HepG2 (cell line): ENCODE measurements at regions of chr15 and their contacts with region 1.

Region 1: DNA sequence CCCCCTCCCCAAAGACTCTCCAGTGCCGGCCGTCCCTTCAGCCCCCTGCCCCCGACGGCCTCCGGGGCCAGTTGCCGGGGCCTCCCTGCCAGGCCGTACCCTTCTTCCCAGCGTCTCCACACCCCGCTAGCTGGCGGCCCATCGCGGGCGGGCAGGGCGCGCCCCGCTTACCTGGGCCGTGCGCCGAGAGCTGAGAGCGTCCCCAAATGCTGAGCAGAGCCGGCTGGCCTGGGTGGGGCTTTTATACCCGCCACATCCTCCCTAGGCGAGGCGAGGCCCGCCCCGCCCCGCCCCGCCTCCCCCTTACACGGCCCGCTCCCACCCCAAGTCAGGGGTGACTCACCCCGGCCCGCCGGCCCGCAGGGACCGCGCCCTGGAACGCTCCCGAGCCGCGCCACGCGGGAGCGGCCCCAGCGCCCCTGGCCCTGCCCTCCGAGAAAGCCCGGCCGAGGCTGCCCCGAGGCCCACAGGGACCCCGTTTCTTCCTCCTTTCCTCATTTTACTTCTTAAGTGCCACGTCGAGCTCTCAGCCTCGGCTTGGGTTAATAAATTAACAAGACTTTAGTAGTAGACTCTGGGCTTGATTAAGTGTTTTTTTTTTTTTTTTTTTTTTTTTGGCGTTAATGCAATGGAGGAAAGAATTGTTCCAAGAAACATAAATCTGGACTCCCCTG is at the start of gene ANXA2:
- DNase-seq: no peak
- ATAC-seq: no peak
- H3K4me3 ChIP-seq: no peak within 1 kb of the TSS
- H3K27ac ChIP-seq: peak within 1 kb of the TSS; percentile 39
- H3K4me1 ChIP-seq: peaks cover 91% of the 10 kb centered on the region
- H3K27me3 ChIP-seq: no peaks in the 10 kb centered on the region; a peak in 1 of 5 replicates
- CTCF ChIP-seq: no peak
- EP300 ChIP-seq: no peak
- POLR2A ChIP-seq: no peak
- RAD21 ChIP-seq: no peak
- total RNA-seq, gene ANXA2: 196 and 233 TPM in 2 replicates

Region 2: GRCh38 chr15:60351066-60351465 is 46.8 kb before region 1 on chr15:
- CTCF ChIA-PET with region 1: no interaction called
- POLR2A ChIA-PET with region 1: no interaction called
- in situ Hi-C with region 1: no loop called
- intact Hi-C with region 1: no loop called
- DNase-seq: no peak
- ATAC-seq: no peak
- H3K4me3 ChIP-seq: no peak overlapping the region
- H3K27ac ChIP-seq: no peak overlapping the region
- H3K4me1 ChIP-seq: no peaks in the 10 kb centered on the region
- H3K27me3 ChIP-seq: no peaks in the 10 kb centered on the region
- CTCF ChIP-seq: no peak
- EP300 ChIP-seq: no peak
- POLR2A ChIP-seq: no peak
- RAD21 ChIP-seq: no peak

Region 3: GRCh38 chr15:60362321-60363086 is 35.4 kb before region 1 on chr15:
- CTCF ChIA-PET with region 1: no interaction called
- POLR2A ChIA-PET with region 1: no interaction called
- in situ Hi-C with region 1: no loop called
- intact Hi-C with region 1: loop called (anchors 1 kb)
- DNase-seq: peak; percentile 11
- ATAC-seq: no peak
- H3K4me3 ChIP-seq: no peak overlapping the region
- H3K27ac ChIP-seq: no peak overlapping the region
- H3K4me1 ChIP-seq: no peaks in the 10 kb centered on the region
- H3K27me3 ChIP-seq: no peaks in the 10 kb centered on the region
- CTCF ChIP-seq: no peak
- EP300 ChIP-seq: no peak
- POLR2A ChIP-seq: no peak
- RAD21 ChIP-seq: no peak

Region 4: DNA sequence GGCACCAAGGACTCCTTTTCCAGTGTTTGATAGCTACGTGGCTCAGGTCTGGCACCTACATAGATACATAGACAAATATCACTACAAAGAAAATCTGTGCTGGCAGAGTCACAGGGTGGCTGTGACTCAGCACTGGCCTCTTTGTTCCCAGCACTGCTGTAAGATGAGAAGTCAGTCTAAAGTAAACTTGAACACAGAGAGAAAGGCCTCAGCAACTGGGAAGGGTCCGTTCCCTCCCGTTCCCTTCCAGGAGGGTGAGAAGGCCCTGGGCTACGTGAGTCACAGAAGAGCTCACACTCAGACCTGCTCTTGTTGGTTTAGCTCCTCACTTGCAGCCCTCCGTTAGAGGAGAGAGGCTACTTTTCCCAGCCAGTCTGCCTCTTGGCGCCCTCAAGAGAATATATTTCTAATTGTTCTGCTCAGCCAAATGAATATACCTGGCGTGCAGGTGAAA is 23.3 kb before region 1 on chr15:
- CTCF ChIA-PET with region 1: no interaction called
- POLR2A ChIA-PET with region 1: interaction called, 117 read pairs
- in situ Hi-C with region 1: no loop called
- intact Hi-C with region 1: loop called (anchors 1 kb)
- DNase-seq: peak; percentile 98
- ATAC-seq: peak; percentile 98
- H3K4me3 ChIP-seq: no peak overlapping the region
- H3K27ac ChIP-seq: peak overlapping the region; percentile 93
- H3K4me1 ChIP-seq: peaks cover 93% of the 10 kb centered on the region
- H3K27me3 ChIP-seq: no peaks in the 10 kb centered on the region
- CTCF ChIP-seq: no peak; the same call in 1 of the 2 replicates
- EP300 ChIP-seq: peak; percentile 70 to 87; a peak in 3 of 4 replicates
- POLR2A ChIP-seq: peak; percentile 42 to 78; a peak in 3 of 4 replicates
- RAD21 ChIP-seq: peak; percentile 37; the same call in 1 of the 2 replicates

Region 5: DNA sequence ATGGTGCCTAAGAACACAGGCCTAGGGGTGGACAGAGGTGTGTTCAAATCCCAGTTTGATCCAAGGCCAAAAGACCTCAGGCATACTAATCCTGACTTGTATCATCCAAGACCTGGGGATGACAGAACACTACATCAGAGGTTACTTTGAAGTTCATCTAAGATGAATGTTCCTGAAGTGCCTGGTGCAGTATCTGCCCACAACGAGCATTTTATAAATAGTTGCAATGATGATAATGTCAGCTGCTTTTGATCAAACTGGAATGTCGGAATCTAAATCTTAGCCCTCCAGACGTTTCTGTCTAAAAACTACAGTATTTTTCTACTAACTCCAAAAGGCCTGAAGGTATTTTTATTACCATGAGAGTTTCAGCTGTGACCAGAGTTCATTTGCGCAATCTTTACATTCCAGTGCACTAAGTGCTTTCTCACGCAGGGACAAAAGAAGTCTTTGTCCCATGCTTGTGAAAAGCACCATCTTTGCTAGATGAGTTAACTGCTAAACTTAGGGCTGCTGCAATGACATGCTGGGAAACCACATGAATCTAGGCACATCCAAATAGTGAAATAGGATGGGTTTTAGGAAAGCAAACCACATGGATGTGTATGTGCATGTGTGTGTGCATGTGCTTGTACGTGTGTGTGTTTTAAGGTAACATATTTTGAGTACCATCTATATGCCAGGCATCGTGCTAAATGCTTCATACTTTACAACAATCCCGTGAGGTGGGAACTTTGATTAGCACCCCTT is 18.2 kb before region 1 on chr15:
- CTCF ChIA-PET with region 1: no interaction called
- POLR2A ChIA-PET with region 1: interaction called, 117 read pairs
- in situ Hi-C with region 1: no loop called
- intact Hi-C with region 1: loop called (anchors 1 kb)
- DNase-seq: peak; percentile 99
- ATAC-seq: peak; percentile 96
- H3K4me3 ChIP-seq: peak overlapping the region in 1 of 3 experiments; percentile 44; a peak in 1 of 6 replicates
- H3K27ac ChIP-seq: peak overlapping the region; percentile 98
- H3K4me1 ChIP-seq: peaks cover 80% of the 10 kb centered on the region
- H3K27me3 ChIP-seq: no peaks in the 10 kb centered on the region
- CTCF ChIP-seq: no peak
- EP300 ChIP-seq: peak; percentile 89 to 95
- POLR2A ChIP-seq: no peak
- RAD21 ChIP-seq: no peak

Region 6: DNA sequence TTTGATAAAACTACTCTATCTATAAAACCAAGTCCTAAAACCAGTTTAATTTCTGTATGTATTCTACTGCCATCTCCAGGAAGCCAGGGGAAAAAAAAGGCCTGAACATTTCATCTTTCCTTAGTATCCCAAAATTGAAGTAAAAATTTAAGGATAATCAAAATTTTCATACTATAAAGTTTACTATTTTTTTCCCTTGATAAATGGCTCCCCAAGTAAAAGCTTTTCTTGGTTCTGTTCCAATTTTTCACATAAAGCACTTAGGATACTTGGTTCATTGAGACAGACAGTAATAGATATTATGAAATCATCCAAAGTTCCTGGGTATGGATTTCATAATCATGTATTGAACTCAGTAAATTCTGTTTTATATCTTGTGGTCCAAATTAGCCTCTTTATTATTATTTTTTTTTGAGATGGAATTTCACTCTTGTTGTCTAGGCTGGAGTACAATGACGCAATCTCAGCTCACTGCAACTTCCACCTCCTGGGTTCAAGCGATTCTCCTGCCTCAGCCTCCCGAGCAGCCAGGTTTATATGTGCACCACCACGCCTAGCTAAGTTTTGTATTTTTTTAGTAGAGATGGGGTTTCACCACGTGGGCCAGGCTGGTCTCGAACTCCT is 46.5 kb after region 1 on chr15:
- CTCF ChIA-PET with region 1: no interaction called
- POLR2A ChIA-PET with region 1: interaction called, 4 read pairs
- in situ Hi-C with region 1: no loop called
- intact Hi-C with region 1: loop called (anchors 5 kb)
- DNase-seq: peak; percentile 28
- ATAC-seq: no peak
- H3K4me3 ChIP-seq: no peak overlapping the region
- H3K27ac ChIP-seq: no peak overlapping the region
- H3K4me1 ChIP-seq: peaks cover 27% of the 10 kb centered on the region
- H3K27me3 ChIP-seq: no peaks in the 10 kb centered on the region
- CTCF ChIP-seq: peak; percentile 27
- EP300 ChIP-seq: no peak
- POLR2A ChIP-seq: no peak
- RAD21 ChIP-seq: peak; percentile 16; the same call in 1 of the 2 replicates

Region 7: DNA sequence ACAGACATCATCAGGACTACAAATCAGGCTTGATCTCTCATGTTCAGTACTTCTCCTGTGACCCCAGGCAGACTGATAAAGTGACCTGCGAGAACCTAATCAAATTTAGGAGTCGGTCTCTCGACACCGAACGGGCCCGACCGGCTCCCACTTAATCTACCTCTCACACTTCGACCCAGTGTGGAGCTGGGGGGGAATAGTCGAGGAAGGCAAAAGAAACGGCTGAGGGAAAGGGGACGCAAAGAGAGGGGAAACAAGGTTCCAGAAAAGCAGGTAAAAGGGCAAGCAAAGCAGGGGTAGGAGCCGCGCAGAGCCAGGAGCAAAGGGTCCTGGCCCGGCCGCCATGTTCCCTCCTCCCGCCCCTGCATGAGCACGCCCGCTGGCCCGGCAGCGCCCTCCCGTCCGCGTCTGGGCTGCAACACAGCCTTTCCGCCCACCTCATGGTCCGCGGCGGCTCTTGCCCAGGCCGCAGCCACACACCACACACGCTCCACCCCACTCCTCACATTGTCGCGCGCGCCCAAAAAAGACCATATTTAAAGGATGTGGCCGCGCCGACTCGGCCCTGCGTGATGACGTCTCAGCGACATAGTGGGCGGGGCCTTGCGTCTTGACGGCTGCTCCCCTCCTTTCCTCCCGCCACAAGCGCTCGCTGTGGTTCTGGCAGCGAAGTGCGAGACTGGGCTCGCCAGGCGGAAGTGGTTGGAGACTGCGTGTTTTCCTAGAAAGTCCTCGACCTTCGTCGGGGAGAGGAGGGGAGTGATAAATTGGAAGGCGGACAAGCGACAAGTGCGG is 80.9 kb after region 1 on chr15 and contains the start of gene ICE2:
- CTCF ChIA-PET with region 1: no interaction called
- POLR2A ChIA-PET with region 1: interaction called, 8 read pairs
- in situ Hi-C with region 1: no loop called
- intact Hi-C with region 1: loop called (anchors 5 kb)
- DNase-seq: peak; percentile 89
- ATAC-seq: peak; percentile 94
- H3K4me3 ChIP-seq: peak within 1 kb of the TSS; percentile 67 to 94 (median 90)
- H3K27ac ChIP-seq: peak within 1 kb of the TSS; percentile 93
- H3K4me1 ChIP-seq: peaks cover 43% of the 10 kb centered on the region
- H3K27me3 ChIP-seq: no peaks in the 10 kb centered on the region; a peak in 1 of 5 replicates
- CTCF ChIP-seq: peak; percentile 57
- EP300 ChIP-seq: no peak
- POLR2A ChIP-seq: peak; percentile 92 to 95
- RAD21 ChIP-seq: no peak; the same call in none of the 2 replicates
- total RNA-seq, gene ICE2: 26.4 and 40.9 TPM in 2 replicates